A673 (cell line): ENCODE measurements at regions of chr15 and their contacts with region 1.

Region 1: DNA sequence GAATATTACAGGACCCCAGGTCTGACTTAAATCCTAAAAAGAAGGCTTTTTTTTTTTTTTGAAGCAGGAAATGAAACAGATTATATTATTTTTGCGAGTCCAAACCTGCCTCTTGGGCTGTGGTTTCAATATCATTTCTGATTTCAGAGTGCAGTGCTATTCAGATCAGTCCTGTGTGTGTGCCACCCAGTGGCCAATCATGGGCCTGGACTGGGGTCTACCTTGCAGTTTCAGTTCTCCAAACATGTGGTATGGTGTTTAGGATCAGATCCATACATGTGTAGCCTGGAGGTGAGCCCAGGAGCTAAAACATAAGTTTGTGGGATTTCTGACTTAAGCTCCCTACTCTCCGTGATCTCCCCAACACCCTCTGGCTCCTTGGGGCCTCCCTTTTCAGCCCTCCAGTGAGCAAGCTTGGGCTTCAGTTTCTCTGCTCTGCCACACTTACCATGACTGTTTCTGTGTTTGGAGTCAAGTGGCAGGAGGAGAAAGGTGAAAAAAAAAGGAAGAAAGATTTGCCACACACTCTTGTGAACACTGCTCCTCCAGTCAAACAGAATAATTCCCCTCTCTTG is 12.1 kb upstream of the THSD4 start:
- DNase-seq: peak; percentile 57
- H3K4me3 ChIP-seq: no peak overlapping the region
- H3K27ac ChIP-seq: no peak overlapping the region
- H3K4me1 ChIP-seq: no peaks in the 10 kb centered on the region
- H3K27me3 ChIP-seq: no peaks in the 10 kb centered on the region
- CTCF ChIP-seq: peak; percentile 68

Region 2: DNA sequence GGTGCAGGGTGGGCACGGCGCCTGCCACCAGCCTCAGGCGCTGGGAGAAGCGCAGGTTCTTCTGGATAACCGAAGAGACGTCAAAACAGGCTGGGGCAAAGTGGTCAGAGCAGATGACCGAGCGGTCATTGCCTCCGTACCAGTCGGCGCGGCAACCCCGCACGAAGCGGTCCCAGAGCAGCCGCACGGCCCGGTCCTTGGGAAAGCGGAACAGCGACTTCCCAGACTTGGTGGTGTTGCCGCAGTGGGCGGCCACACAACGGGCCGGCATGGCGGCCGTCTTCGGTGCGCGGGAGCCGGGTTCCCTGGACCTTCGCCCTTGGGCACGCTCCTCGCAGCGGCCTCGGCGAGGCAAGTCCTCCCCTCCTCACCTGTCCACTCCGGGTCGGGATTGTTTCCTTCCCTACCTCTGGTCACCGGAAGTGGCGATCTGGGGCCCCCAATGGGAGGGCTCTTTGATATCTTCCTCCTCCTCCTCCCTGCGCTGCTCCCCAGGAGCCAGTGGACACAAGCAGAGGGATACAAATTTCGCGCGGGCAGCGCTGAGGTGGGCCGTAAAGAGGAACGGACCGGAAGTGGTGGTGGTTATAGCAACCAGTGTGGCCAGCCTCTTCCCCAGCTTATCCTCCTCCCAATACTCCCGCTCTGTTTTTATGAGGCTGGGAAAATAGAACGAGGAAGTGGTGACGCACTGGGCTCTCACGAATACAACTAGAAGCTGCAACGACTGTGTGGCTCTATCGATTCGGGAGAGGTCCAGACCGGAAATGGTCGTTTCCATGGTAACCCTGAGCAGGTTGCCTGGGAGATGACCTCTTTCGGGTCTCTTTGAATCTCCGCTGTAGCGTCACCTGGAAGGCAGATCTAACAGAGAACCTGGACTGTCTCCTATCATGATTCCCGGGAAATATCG is 210.9 kb before region 1 on chr15 and contains the starts of genes LRRC49 and THAP10:
- CTCF ChIA-PET with region 1: no interaction called
- POLR2A ChIA-PET with region 1: no interaction called
- intact Hi-C with region 1: loop called (anchors 10 kb)
- DNase-seq: peak; percentile 96
- H3K4me3 ChIP-seq: peak within 1 kb of the TSS; percentile 84
- H3K27ac ChIP-seq: peak within 1 kb of the TSS; percentile 73
- H3K4me1 ChIP-seq: peaks cover 10% of the 10 kb centered on the region
- H3K27me3 ChIP-seq: no peaks in the 10 kb centered on the region
- CTCF ChIP-seq: no peak
- total RNA-seq, gene LRRC49: 9.2 and 10.9 TPM in 2 replicates
- total RNA-seq, gene THAP10: 6.2 and 6.6 TPM in 2 replicates

Region 3: GRCh38 chr15:70907784-70908471 is 195.3 kb before region 1 on chr15:
- CTCF ChIA-PET with region 1: no interaction called
- POLR2A ChIA-PET with region 1: no interaction called
- intact Hi-C with region 1: no loop called
- DNase-seq: no peak
- H3K4me3 ChIP-seq: no peak overlapping the region
- H3K27ac ChIP-seq: no peak overlapping the region
- H3K4me1 ChIP-seq: no peaks in the 10 kb centered on the region
- H3K27me3 ChIP-seq: no peaks in the 10 kb centered on the region
- CTCF ChIP-seq: peak; percentile 40; the same call in 1 of the 2 replicates

Region 4: GRCh38 chr15:70974004-70974832 is 129.0 kb before region 1 on chr15:
- CTCF ChIA-PET with region 1: no interaction called
- POLR2A ChIA-PET with region 1: no interaction called
- intact Hi-C with region 1: loop called (anchors 10 kb)
- DNase-seq: peak; percentile 48
- H3K4me3 ChIP-seq: no peak overlapping the region
- H3K27ac ChIP-seq: no peak overlapping the region
- H3K4me1 ChIP-seq: no peaks in the 10 kb centered on the region
- H3K27me3 ChIP-seq: no peaks in the 10 kb centered on the region
- CTCF ChIP-seq: peak; percentile 48; the same call in 1 of the 2 replicates

Region 5: DNA sequence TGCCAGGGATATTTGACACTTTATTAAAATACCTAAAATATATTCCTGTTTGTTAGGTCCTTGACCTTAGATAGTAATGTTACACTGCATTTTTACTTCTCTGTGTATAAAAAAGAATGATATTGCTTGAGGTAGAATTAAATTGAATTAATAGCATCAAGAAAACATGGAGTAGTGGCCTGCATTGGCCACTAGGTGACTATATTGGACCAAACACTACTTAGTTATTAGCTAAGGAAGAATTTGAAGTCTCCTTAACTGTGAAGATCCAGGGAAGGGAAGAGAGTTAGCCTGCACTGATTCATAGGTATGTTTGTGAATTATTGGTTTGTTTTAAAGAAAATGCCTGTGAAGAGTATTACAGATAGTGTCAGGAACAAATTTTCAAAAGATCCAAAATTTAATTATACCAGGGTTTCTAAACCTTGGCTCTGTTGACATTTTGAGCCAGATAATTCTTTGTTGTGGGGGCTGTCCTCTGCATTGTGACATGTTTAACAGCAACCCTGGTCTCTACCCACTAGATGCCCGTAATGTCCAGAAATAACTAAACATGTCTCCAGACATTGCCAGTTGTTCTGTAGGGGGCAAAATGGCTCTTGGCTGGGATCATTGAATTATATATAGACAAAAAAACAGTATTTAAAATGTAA is 91.6 kb before region 1 on chr15:
- CTCF ChIA-PET with region 1: interaction called, 5 read pairs
- POLR2A ChIA-PET with region 1: no interaction called
- intact Hi-C with region 1: loop called (anchors 2 kb)
- DNase-seq: peak; percentile 45
- H3K4me3 ChIP-seq: no peak overlapping the region
- H3K27ac ChIP-seq: no peak overlapping the region
- H3K4me1 ChIP-seq: no peaks in the 10 kb centered on the region
- H3K27me3 ChIP-seq: no peaks in the 10 kb centered on the region
- CTCF ChIP-seq: peak; percentile 73

Region 6: DNA sequence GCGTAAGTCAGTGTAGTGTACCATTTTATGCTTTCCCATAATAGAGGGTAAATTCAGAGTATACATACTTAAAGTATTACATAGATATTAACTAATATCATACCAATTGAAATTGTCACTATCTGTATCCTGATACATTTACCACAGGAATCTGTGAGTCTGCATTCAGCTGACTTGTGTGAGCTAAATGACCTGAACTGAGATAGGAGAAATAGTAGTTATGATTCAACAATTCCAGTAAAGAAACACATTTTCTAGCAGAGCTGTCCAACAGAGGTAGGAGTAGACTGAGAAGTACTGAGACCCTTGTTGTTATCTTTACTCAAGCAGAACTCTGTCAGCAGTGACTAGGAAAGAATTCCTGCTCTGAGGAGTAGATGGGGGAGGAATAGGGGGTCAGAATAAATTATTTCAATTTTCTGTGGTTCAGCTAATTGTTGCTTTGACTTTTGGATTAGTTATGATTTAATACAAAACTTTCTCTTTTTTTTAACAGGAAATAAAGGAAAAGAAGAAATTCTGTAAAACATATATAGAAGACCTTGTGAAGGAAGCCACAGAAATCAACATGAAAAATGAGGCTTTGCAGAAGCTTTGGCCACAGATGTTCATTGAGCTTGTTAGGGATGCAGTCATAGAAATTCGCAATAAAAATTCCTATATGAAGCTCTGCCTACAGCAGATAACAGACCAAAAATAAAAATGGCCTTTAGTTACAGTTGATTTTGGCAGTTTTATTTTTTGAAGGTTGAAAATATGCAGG is 54.1 kb before region 1 on chr15:
- CTCF ChIA-PET with region 1: no interaction called
- POLR2A ChIA-PET with region 1: no interaction called
- intact Hi-C with region 1: no loop called
- DNase-seq: no peak
- H3K4me3 ChIP-seq: no peak overlapping the region
- H3K27ac ChIP-seq: no peak overlapping the region
- H3K4me1 ChIP-seq: peaks cover 4% of the 10 kb centered on the region
- H3K27me3 ChIP-seq: no peaks in the 10 kb centered on the region
- CTCF ChIP-seq: no peak

Region 7: GRCh38 chr15:71060983-71061382 is 42.2 kb before region 1 on chr15:
- CTCF ChIA-PET with region 1: no interaction called
- POLR2A ChIA-PET with region 1: no interaction called
- intact Hi-C with region 1: no loop called
- DNase-seq: no peak
- H3K4me3 ChIP-seq: no peak overlapping the region
- H3K27ac ChIP-seq: no peak overlapping the region
- H3K4me1 ChIP-seq: no peaks in the 10 kb centered on the region
- H3K27me3 ChIP-seq: no peaks in the 10 kb centered on the region
- CTCF ChIP-seq: no peak